Adrenal gland (tissue), 19 donors: ENCODE measurements at regions of chr9 and their contacts with region 1.

Region 1: GRCh38 chr9:19174127-19174912 is 47.0 kb upstream of the PLIN2 start:
- DNase-seq: peak; percentile 41 to 83 (median 76)
- H3K4me3 ChIP-seq: no peak overlapping the region
- H3K27ac ChIP-seq: no peak overlapping the region
- H3K4me1 ChIP-seq: peaks cover 5 to 19% of the 10 kb centered on the region in 2 donors
- H3K27me3 ChIP-seq: no peaks in the 10 kb centered on the region
- CTCF ChIP-seq: peak; percentile 54 to 93 (median 63)
- POLR2A ChIP-seq: no peak

Region 2: DNA sequence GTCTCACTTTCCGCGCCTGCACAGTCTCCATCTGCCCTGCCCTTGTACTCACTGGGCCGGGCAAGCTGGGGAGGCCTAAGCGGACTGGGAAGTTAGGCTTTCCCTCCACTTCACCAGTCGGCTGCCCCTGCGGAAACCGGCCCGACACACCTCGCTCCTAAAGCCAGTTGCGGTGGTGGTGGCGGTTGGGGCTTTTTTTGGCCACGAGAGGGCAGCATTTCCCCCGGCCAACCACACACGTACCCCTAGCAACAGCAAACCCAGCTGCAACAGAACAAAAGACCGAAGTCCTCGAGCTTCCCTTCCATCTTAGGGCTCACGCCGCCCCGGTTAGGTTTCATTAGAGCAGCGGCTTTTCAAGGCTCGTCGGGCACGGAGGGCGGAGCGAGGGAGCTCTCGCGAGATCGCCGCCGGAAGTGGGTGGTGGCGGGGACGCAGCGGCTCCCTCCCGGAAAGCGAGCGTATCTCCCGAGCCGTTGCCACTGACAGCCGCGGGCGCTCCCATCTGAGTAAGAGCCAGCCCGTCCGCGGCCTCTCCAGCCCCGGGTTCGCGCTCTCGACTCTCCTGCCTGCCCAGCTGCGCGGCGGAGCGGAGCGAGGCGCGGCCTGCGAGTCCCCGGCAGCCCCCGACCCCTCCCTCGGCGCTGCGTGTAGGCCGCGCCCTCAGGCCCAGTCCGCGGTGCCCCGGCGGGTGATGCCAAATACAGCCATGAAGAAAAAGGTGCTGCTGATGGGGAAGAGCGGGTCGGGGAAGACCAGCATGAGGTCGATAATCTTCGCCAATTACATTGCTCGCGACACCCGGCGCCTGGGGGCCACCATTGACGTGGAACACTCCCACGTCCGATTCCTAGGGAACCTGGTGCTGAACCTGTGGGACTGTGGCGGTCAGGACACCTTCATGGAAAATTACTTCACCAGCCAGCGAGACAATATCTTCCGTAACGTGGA is 125.1 kb before region 1 on chr9 and contains the start of gene RRAGA:
- intact Hi-C with region 1: loop called in 1 of 2 experiments (anchors 10 kb)
- DNase-seq: peak; percentile 93 to 98 (median 95)
- H3K4me3 ChIP-seq: peak within 1 kb of the TSS; percentile 76 to 88 (median 81)
- H3K27ac ChIP-seq: peak within 1 kb of the TSS; percentile 90 to 98 (median 95)
- H3K4me1 ChIP-seq: peaks cover 10 to 26% of the 10 kb centered on the region in 2 donors
- H3K27me3 ChIP-seq: no peaks in the 10 kb centered on the region
- CTCF ChIP-seq: peak; percentile 68 to 94 (median 88)
- POLR2A ChIP-seq: peak; percentile 93
- total RNA-seq, gene RRAGA: 38.8 to 115 (median 78.6) TPM

Region 3: GRCh38 chr9:19085295-19085694 is 89.0 kb before region 1 on chr9:
- intact Hi-C with region 1: loop called in 1 of 2 experiments (anchors 10 kb)
- DNase-seq: no peak
- H3K4me3 ChIP-seq: no peak overlapping the region
- H3K27ac ChIP-seq: no peak overlapping the region
- H3K4me1 ChIP-seq: peaks cover 4 to 11% of the 10 kb centered on the region in 2 donors
- H3K27me3 ChIP-seq: no peaks in the 10 kb centered on the region
- CTCF ChIP-seq: peak in 5 of 6 experiments; percentile 4 to 36 (median 32)
- POLR2A ChIP-seq: no peak

Region 4: GRCh38 chr9:19252174-19252884 is 78.0 kb after region 1 on chr9:
- intact Hi-C with region 1: no loop called
- DNase-seq: no peak
- H3K4me3 ChIP-seq: no peak overlapping the region
- H3K27ac ChIP-seq: no peak overlapping the region
- H3K4me1 ChIP-seq: peaks cover 0 to 9% of the 10 kb centered on the region in 2 donors
- H3K27me3 ChIP-seq: no peaks in the 10 kb centered on the region
- CTCF ChIP-seq: no peak
- POLR2A ChIP-seq: no peak